Activated CD4-positive, alpha-beta memory T cell treated with anti-CD3 and anti-CD28 coated beads, Interleukin-2, amount 10 ng/mL, durations not matched to agents 7 days and 5 days (primary cell): ENCODE measurements at regions of chr15 and their contacts with region 1.

Region 1: GRCh38 chr15:75836953-75837321 is 6.3 kb upstream of the UBE2Q2 start:
- DNase-seq: peak; percentile 84
- H3K4me3 Mint-ChIP-seq: no peak overlapping the region
- H3K27ac Mint-ChIP-seq: no peak overlapping the region
- H3K4me1 Mint-ChIP-seq: peaks cover 23% of the 10 kb centered on the region
- H3K27me3 Mint-ChIP-seq: peaks cover 11% of the 10 kb centered on the region

Region 2: GRCh38 chr15:75760704-75761457 is 76.1 kb before region 1 on chr15:
- CTCF ChIA-PET with region 1: no interaction called
- POLR2A ChIA-PET with region 1: no interaction called
- DNase-seq: no peak
- H3K4me3 Mint-ChIP-seq: no peak overlapping the region
- H3K27ac Mint-ChIP-seq: no peak overlapping the region
- H3K4me1 Mint-ChIP-seq: peaks cover 17% of the 10 kb centered on the region
- H3K27me3 Mint-ChIP-seq: peaks cover 2% of the 10 kb centered on the region

Region 3: GRCh38 chr15:75785771-75786574 is 51.0 kb before region 1 on chr15:
- CTCF ChIA-PET with region 1: no interaction called
- POLR2A ChIA-PET with region 1: no interaction called
- DNase-seq: no peak
- H3K4me3 Mint-ChIP-seq: no peak overlapping the region
- H3K27ac Mint-ChIP-seq: no peak overlapping the region
- H3K4me1 Mint-ChIP-seq: no peaks in the 10 kb centered on the region
- H3K27me3 Mint-ChIP-seq: peaks cover 36% of the 10 kb centered on the region

Region 4: DNA sequence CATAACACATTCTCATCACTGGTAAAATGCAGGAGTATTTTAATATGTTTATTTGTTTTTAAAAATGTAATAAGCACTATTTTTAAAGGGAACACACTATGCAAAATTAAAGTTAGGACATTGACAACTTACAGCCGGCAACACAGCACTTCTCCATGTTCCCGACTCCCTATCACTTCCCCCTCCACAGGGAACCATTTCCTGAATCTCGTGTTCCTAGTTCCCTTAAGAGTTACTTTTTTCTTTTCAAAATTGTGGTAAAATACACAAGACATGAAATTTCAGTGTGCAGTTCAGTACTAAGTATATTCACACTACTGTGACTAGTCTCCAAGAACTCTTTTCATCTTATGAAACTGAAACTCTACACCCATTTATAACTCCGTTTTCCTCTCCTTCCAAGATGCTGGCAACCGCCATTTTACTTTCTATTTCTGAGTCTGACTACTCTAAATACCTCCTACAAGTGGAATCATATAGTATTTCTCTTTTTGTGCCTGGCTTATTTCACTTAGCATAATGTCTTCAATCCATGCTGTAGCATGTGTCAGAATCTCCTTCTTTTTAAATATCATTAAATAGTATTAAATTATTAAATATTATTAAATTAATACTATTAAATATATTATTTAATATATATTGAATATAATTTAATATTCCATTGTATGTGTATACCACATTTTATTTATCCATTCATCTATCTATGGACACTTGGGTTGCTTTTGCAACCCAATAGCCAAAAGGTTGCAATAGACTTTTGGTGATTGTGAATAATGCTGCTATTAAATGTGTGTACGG is 19.6 kb before region 1 on chr15:
- CTCF ChIA-PET with region 1: interaction called, 29 read pairs
- POLR2A ChIA-PET with region 1: interaction called, 10 read pairs
- DNase-seq: no peak
- H3K4me3 Mint-ChIP-seq: peak overlapping the region; percentile 62
- H3K27ac Mint-ChIP-seq: peak overlapping the region; percentile 61
- H3K4me1 Mint-ChIP-seq: peaks cover 30% of the 10 kb centered on the region
- H3K27me3 Mint-ChIP-seq: no peaks in the 10 kb centered on the region